ENCODE measurements at regions of chr4 and their contacts with region 1.

Region 1: GRCh38 chr4:147916351-147916750 is 184.5 kb downstream of the ARHGAP10 start:
- DNase-seq: no peak

Region 2: GRCh38 chr4:147950841-147951240 is 34.5 kb after region 1 on chr4:
- intact Hi-C with region 1: loop called in 1 of 2 experiments (anchors 5 kb)
- DNase-seq: no peak

Measured in posterior vena cava (tissue), 2 donors.